ENCODE measurements at regions of chr10 and their contacts with region 1.

Region 1: GRCh38 chr10:92799591-92800446 is 48.5 kb upstream of the EXOC6 start:
- DNase-seq: no peak
- H3K4me3 ChIP-seq: no peak overlapping the region
- H3K27ac ChIP-seq: no peak overlapping the region
- H3K4me1 ChIP-seq: no peaks in the 10 kb centered on the region
- H3K27me3 ChIP-seq: no peaks in the 10 kb centered on the region
- CTCF ChIP-seq: no peak
- POLR2A ChIP-seq: no peak

Region 2: GRCh38 chr10:92914478-92915325 is 114.9 kb after region 1 on chr10:
- intact Hi-C with region 1: no loop called
- DNase-seq: peak; percentile 74
- H3K4me3 ChIP-seq: no peak overlapping the region
- H3K27ac ChIP-seq: no peak overlapping the region
- H3K4me1 ChIP-seq: no peaks in the 10 kb centered on the region
- H3K27me3 ChIP-seq: no peaks in the 10 kb centered on the region
- CTCF ChIP-seq: peak; percentile 26 to 68 (median 56)
- POLR2A ChIP-seq: no peak

Region 3: GRCh38 chr10:93059975-93060886 is 260.4 kb after region 1 on chr10 and contains the start of gene CYP26C1:
- intact Hi-C with region 1: loop called (anchors 10 kb)
- DNase-seq: no peak
- H3K4me3 ChIP-seq: peak within 1 kb of the TSS in 1 of 2 donors; percentile 36
- H3K27ac ChIP-seq: no peak within 1 kb of the TSS
- H3K4me1 ChIP-seq: peaks cover 9% of the 10 kb centered on the region
- H3K27me3 ChIP-seq: no peaks in the 10 kb centered on the region
- CTCF ChIP-seq: no peak
- POLR2A ChIP-seq: no peak
- total RNA-seq, gene CYP26C1: 0.31 to 0.68 TPM